ENCODE measurements at regions of chr4 and their contacts with region 1.

Region 1: GRCh38 chr4:10018818-10019461 is 2.4 kb downstream of the SLC2A9 start:
- DNase-seq: peak; percentile 98
- H3K4me3 ChIP-seq: peak overlapping the region; percentile 47 to 56 (median 52)
- H3K27ac ChIP-seq: peak overlapping the region; percentile 83 to 90 (median 86)
- H3K4me1 ChIP-seq: peaks cover 42 to 50% (median 45%) of the 10 kb centered on the region in 4 donors
- H3K27me3 ChIP-seq: no peaks in the 10 kb centered on the region
- CTCF ChIP-seq: peak; percentile 99 to 100 (median 100)
- EP300 ChIP-seq: no peak
- POLR2A ChIP-seq: peak; percentile 12

Region 2: GRCh38 chr4:9762823-9763475 is 256.0 kb before region 1 on chr4:
- intact Hi-C with region 1: loop called (anchors 2 kb)
- DNase-seq: no peak
- H3K4me3 ChIP-seq: no peak overlapping the region
- H3K27ac ChIP-seq: no peak overlapping the region
- H3K4me1 ChIP-seq: no peaks in the 10 kb centered on the region
- H3K27me3 ChIP-seq: peaks cover 0 to 27% (median 0%) of the 10 kb centered on the region in 4 donors
- CTCF ChIP-seq: peak; percentile 56 to 66 (median 61)
- EP300 ChIP-seq: no peak
- POLR2A ChIP-seq: no peak

Region 3: DNA sequence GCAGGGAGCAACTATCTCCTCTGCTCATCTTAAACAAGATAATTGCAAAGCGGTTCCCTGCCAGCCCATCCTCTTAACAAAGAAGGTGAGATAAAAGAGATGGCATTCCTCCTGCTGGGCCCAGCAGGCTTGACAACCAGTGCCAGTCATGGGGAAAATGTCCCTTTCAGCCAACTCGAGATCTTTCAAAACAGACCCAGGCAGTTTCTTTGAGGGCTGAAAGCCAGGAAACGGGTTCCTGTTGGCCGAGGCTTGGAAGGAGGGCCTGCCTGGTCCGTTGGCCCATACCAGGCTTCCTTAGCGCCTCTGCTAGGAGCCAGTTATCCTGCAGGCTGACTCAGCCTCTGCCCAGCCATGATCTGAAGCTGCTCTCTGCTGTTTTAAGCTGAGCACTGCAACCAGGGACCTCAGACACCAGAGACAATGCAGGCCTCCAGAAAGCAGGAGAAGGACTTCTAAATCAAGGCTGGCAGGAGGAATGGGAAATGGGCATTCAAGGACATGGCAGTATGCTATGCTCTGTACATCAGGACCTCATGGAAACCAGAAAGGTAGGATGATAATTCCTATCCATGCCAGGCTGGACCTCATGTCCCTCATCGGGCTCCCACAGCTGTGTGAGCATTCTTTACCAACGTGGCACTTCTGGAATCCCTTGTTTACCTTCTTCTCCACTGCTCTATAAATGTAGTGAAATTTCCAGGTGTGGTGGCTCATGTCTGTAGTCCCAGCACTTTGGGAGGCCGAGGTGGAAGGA is 44.8 kb after region 1 on chr4:
- intact Hi-C with region 1: loop called (anchors 5 kb)
- DNase-seq: no peak
- H3K4me3 ChIP-seq: no peak overlapping the region
- H3K27ac ChIP-seq: peak overlapping the region; percentile 41 to 59 (median 52)
- H3K4me1 ChIP-seq: peaks cover 10 to 16% (median 14%) of the 10 kb centered on the region in 4 donors
- H3K27me3 ChIP-seq: no peaks in the 10 kb centered on the region
- CTCF ChIP-seq: peak; percentile 58 to 64 (median 61)
- EP300 ChIP-seq: no peak
- POLR2A ChIP-seq: no peak

Region 4: GRCh38 chr4:10281996-10282395 is 263.1 kb after region 1 on chr4:
- intact Hi-C with region 1: no loop called
- DNase-seq: no peak
- H3K4me3 ChIP-seq: no peak overlapping the region
- H3K27ac ChIP-seq: no peak overlapping the region
- H3K4me1 ChIP-seq: peaks cover 0 to 4% (median 0%) of the 10 kb centered on the region in 4 donors
- H3K27me3 ChIP-seq: no peaks in the 10 kb centered on the region
- CTCF ChIP-seq: no peak
- EP300 ChIP-seq: no peak
- POLR2A ChIP-seq: no peak

Measured in esophagus muscularis mucosa (tissue), 4 donors.